BJ (cell line): ENCODE measurements at regions of chr18 and their contacts with region 1.

Region 1: DNA sequence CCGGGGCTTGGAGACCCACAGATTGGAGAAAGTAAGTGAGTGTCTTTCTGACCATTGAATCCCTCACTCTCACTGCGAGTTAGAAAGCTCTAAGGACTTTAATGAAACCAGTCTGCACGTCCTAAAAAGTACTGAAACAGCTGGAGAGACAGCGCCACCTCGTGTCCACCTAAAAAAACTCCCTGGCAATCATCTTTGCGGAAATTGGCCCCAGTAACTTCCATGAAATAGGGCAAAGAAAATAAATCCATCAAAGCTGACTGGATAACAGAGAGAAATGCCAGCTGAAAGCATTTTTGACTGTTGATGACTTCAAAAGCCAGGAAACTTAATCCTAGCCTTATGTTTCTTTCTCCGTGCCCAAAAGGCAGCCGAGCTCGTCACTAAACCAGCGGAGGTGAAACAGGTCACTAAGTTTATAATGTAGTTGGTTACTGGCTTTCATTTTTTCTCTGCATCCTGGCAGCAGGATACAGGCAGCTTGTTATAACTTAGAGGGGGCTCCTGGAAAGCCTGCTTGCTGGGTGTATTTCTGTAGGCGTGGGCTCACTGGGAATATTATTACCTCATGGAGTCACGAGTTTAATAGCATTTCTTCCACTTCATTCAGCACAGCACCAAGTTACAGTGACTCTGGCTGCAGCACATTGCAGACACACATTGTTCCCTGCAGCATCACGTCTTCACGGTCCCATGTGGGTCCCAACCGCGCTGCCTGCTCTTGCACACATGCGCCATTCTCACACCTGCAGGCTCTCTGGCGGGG is 266.5 kb downstream of the HRH4 start:
- DNase-seq: no peak
- H3K4me3 ChIP-seq: peak overlapping the region; percentile 36
- H3K27me3 ChIP-seq: peaks cover 13% of the 10 kb centered on the region
- CTCF ChIP-seq: peak; percentile 85

Region 2: GRCh38 chr18:24488824-24489493 is 238.0 kb before region 1 on chr18:
- CTCF ChIA-PET with region 1: interaction called, 25 read pairs
- POLR2A ChIA-PET with region 1: no interaction called
- DNase-seq: no peak
- H3K4me3 ChIP-seq: no peak overlapping the region
- H3K27me3 ChIP-seq: no peaks in the 10 kb centered on the region
- CTCF ChIP-seq: peak; percentile 70

Region 3: GRCh38 chr18:24600076-24600654 is 126.7 kb before region 1 on chr18:
- CTCF ChIA-PET with region 1: interaction called, 72 read pairs
- POLR2A ChIA-PET with region 1: no interaction called
- DNase-seq: peak; percentile 20
- H3K4me3 ChIP-seq: no peak overlapping the region
- H3K27me3 ChIP-seq: peaks cover 7% of the 10 kb centered on the region
- CTCF ChIP-seq: peak; percentile 55

Region 4: DNA sequence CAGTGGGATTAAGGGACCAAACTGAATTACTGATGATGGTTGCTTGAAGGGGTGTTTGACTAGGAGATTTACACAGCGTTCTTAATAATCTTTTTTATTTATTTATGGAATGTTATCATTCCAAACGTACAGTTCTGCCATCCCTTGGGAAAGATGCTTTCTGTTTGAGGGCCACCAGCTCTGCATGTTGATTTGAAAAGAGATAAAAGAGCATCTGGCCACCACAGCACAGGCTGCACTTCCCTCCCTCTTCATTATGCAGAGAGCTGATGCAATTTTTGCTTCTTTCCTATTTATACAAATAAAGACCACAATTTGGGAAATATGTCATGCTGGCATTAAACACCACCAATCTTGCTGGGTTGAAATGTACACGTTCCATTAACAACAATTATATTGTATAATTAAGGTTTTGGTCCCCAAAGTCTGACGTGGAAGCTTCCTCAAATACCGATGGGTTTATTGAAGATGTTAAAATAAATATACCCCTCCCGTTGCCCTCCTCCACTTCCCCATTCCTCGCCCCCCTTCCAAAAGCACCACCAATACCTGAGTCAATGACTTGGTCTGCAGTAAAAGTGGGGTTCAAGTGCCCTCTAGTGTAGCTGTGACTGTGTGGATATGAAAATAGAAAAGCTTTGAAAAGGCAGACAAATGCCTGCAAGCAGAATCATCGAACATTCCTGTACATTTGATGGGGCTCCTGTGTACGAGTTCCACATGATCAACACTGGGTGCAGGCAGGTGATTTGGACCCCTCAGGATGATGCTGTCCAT is 54.6 kb before region 1 on chr18:
- CTCF ChIA-PET with region 1: interaction called, 12 read pairs
- POLR2A ChIA-PET with region 1: no interaction called
- DNase-seq: no peak
- H3K4me3 ChIP-seq: no peak overlapping the region
- H3K27me3 ChIP-seq: peaks cover 4% of the 10 kb centered on the region; the same call in 1 of the 2 replicates
- CTCF ChIP-seq: peak; percentile 21; the same call in 1 of the 2 replicates

Region 5: DNA sequence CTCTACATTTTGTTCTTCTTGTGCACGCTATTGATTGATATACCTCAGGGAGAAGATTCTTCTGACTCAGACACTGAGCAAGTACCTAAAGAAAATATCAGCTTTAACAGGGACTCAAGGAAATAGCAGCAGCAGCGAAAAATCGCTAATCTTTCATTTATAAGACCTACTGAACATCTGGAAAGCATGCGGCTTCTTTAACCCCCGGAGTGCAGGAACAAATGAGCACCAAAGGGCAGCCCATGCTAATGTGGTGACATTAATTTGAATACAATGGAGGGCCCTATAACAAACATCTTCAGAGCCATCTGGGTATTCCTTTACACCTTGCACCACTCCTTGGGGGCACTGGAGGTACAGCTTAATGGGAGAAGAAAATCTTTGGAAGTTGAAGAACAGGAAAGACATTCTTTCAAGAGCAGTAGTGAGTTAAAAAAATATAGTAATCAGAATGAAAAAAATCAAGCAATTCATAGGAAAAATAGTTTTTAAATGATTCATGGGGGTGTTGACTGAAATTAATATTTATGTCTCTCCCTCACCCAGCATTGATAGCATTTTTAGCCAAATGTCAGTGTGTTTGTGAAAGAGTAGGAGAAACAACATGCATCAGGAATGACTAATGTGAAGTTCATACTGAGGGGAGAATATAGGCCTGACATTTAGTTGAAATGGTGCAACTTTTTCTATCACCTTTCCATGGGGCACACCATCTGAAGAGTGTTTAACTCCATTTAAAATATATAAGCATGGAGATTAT is 15.2 kb after region 1 on chr18:
- CTCF ChIA-PET with region 1: interaction called, 16 read pairs
- POLR2A ChIA-PET with region 1: no interaction called
- DNase-seq: peak; percentile 46
- H3K4me3 ChIP-seq: no peak overlapping the region
- H3K27me3 ChIP-seq: peaks cover 1% of the 10 kb centered on the region; the same call in 1 of the 2 replicates
- CTCF ChIP-seq: no peak

Region 6: DNA sequence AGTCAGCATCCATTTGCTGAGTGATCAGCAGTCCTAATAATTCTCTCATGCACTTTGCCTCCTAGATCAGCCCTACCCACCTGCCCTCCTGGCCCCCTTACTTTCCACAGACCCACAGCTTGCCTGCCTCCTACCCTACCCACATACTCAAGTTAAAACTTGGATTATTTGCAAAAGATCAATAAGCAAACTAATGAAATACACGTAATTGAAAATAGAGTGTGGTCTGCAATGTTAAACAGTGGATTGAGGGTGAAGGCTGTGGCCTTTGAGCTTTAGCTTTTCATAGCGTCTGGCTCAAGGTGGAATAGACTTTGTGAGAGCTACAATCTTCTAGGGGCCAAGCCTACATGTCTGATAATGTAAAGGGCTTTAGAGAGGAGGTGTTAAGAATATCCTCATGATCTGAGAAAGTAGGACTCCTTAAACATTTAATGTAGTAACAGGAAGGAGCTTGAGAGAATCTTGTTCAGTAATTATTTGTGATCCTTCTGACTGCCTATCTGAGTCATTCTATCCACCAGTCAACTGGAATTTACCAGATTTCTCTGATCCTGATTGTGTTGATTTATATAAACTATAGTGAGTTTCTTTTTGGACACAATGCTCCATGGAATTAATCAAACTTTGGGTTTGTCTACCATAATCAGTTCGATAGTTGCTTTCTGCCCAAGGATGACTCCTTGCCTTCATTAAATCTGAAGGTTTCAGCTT is 43.6 kb after region 1 on chr18:
- CTCF ChIA-PET with region 1: no interaction called
- POLR2A ChIA-PET with region 1: no interaction called
- DNase-seq: no peak
- H3K4me3 ChIP-seq: no peak overlapping the region
- H3K27me3 ChIP-seq: no peaks in the 10 kb centered on the region
- CTCF ChIP-seq: no peak

Region 7: DNA sequence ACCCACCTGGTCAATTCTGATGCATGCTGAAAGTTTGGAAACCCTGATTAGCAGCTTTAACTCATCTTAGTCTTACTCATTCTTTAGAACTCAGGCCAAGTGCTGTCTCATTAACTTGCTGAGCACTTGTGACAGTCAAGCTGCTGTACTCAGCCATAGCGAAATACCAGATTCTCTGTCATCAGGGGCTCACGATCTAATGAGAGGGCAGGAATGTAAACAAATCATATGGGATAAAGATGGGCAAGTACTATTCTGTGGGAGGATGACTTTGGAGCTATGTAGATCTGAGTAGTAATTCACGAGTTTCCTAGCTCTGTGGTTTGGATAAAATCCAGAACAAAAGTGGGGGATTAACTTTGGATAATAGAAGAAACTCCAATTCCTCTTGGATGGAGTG is 110.2 kb after region 1 on chr18:
- CTCF ChIA-PET with region 1: no interaction called
- POLR2A ChIA-PET with region 1: no interaction called
- DNase-seq: peak; percentile 96
- H3K4me3 ChIP-seq: no peak overlapping the region
- H3K27me3 ChIP-seq: peaks cover 4% of the 10 kb centered on the region
- CTCF ChIP-seq: no peak